Spleen (tissue), 13 donors: ENCODE measurements at regions of chr18 and their contacts with region 1.

Region 1: DNA sequence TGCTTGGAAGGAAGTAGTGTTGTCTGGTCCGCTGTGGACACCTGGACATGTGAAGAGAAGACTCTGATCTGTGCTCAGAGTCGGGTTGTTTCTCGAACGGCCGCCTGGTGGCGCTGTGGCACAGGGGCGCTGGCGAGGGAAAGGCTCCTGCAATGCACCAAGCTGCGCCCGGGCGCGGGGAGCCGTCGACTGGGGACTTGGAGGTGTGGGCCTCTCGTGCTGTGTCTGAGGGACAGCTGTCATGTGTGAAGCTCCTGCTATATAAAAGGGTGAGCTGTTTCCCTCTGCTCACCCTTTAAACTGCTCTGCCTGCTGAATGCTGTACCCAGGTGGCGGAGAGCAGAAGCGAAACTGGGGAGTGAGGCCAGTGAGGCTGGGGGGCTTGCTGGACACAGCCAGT is 44.0 kb downstream of the GNAL start:
- DNase-seq: peak; percentile 94
- H3K4me3 ChIP-seq: peak overlapping the region in 6 of 8 donors; percentile 11 to 56 (median 30)
- H3K27ac ChIP-seq: no peak overlapping the region
- H3K4me1 ChIP-seq: peaks cover 0 to 8% (median 3%) of the 10 kb centered on the region in 6 donors
- H3K27me3 ChIP-seq: peaks cover 0 to 75% (median 8%) of the 10 kb centered on the region in 7 donors
- CTCF ChIP-seq: peak; percentile 48 to 88 (median 76)
- POLR2A ChIP-seq: no peak

Region 2: DNA sequence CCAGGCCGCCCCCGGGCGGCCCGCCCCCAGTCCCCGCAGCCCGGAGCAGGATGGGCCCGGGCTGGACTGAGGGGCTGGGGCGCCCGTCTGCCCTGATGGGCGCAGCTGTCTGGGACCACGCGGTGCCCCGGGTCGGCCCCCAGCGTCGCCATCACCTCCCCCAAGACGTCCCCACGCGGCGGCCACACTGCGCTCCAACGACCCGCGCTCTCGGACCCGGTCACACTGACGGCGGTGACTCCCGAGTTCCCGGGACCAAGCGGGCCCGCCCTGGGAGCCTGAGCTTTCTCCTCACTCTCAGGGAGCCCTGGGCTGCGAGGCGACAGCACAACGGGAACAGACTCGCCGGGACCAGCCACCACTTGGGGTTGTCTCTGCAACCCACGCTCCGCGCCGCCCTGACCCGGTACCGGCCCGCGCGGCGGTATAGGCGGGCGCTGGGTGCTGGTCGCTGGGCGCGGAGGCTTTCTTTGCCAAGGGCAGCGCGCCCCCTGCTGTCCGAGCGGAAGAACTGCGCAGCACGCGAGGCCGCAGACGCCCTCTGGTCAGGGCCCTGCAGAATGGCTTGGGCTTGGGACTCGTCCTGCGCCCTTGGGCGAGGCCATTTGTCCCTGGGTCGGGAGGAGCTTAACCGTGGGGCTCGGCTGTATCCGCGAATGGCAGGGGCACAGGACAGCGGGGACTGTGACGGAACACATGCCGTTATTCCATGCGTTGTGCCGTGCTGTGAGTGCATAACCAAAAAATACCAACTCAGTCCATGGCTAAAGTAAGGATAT is 305.8 kb after region 1 on chr18:
- intact Hi-C with region 1: loop called (anchors 5 kb)
- DNase-seq: peak; percentile 96
- H3K4me3 ChIP-seq: peak overlapping the region; percentile 40 to 75 (median 54)
- H3K27ac ChIP-seq: no peak overlapping the region
- H3K4me1 ChIP-seq: peaks cover 6 to 24% (median 14%) of the 10 kb centered on the region in 6 donors
- H3K27me3 ChIP-seq: peaks cover 0 to 16% (median 8%) of the 10 kb centered on the region in 7 donors
- CTCF ChIP-seq: peak; percentile 97 to 99 (median 99)
- POLR2A ChIP-seq: no peak